GM13977 (cell line): ENCODE measurements at regions of chr17 and their contacts with region 1.

Region 1: DNA sequence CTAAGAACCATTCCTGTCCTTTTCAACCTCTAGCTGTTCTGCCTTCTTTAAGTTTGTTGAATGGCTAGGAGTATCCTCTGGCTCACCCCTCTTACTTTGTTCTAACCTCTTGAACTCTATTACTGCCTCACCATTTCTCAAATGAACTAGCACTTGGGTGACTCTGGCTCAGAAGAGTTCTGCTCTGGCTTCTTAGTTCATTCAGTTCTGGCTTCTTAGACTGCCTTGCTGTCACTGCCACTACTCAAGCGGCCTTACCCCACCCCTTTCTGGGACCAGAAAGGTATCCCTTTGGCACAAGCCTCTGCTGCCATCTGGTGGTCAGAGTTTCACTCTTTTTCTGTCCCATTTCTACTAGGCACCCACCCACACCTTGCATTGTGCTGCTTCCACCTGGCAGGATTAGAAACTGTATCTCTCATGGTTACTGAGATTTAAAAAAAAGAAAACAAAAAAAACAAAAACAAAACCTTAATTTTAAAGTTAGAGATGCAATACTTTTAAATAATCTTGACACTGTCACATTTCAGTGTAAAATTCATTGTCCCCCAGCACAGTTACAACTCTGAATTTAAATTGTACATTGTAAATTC is 6.8 kb upstream of the ABCA10 start:
- DNase-seq: peak; percentile 29
- CTCF ChIP-seq: peak; percentile 64

Region 2: GRCh38 chr17:68539548-68540467 is 695.6 kb before region 1 on chr17:
- in situ Hi-C with region 1: loop called (anchors 25 kb)
- DNase-seq: no peak
- CTCF ChIP-seq: peak; percentile 43

Region 3: DNA sequence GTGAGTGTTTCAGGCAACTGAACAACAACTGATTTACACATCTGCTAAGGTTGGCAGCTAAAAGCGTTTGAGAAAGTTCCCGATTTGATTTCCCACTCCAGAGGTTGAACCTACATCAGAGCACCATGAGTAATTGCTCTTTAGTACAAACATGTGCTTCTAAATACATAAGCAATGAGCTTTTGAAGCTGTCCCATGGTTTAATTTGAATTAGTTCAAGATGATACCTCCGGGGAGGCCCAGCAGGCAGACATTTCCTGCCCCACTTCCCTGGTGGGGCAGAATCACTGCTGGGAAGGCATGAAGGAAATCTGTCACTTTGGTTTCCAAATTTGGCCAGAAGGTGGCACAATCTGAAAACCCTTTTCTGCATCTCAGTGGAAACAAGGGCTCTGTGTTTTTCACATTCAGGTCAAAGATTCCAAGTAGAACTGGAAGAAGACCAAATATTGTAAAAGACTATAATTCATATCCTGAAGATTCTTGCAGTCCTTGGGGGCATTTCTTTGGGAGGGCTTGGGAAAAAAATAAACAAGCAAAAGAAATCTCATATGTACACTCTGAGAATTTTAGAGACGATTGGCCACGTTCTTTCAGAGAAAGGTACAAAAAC is 458.1 kb before region 1 on chr17:
- in situ Hi-C with region 1: loop called (anchors 5 kb)
- DNase-seq: peak; percentile 32
- CTCF ChIP-seq: peak; percentile 71

Region 4: DNA sequence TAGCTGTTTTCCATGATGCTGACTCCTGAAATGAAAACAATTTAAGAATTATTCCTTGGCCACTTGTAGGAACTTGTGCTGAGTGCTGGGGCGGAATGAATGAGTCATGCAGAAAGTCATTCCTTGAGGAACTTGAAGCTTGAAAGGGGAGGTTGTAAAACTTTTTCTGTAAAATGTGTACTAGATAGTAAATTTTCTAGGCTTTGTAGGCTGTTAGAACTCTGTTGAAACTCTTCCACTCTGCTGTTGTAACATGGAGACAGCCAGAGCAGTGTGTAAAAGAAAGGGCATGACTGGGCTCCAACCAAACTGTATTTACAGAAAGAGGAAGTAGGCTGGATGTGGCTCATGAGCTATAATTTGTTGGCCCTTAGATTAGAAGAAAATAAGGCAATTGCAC is 326.4 kb before region 1 on chr17:
- in situ Hi-C with region 1: loop called (anchors 25 kb)
- DNase-seq: peak; percentile 12
- CTCF ChIP-seq: no peak

Region 5: DNA sequence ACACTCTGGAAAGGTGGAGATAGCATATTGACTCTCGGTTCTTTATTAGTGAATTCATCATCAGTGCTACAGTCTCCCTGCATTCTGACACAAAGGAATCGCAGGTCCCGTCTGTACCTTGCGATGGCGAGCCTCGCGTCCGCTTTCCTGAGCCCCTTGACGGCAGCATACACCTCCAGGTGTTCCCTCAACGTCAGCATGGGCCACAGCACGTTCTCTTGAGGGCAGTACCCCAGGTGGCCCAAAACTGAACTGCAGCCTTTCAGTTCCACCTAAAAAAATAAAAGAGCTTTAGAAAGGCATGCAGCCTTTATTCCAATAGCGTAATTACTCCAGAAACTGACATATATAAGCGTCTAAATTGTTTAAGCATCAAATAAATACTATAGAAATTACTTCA is 150.5 kb before region 1 on chr17:
- in situ Hi-C with region 1: no loop called
- DNase-seq: no peak
- CTCF ChIP-seq: no peak